Activated B cell treated with CpG ODN at 0.5 μM for 24 hours (primary cell): ENCODE measurements at regions of chr19 and their contacts with region 1.

Region 1: GRCh38 chr19:38492181-38492813 is 58.8 kb downstream of the RYR1 start:
- DNase-seq: no peak
- ATAC-seq: peak; percentile 50
- H3K4me3 Mint-ChIP-seq: no peak overlapping the region
- H3K27ac Mint-ChIP-seq: no peak overlapping the region
- H3K4me1 Mint-ChIP-seq: peaks cover 16% of the 10 kb centered on the region
- H3K27me3 Mint-ChIP-seq: peaks cover 18% of the 10 kb centered on the region
- CTCF ChIP-seq: no peak

Region 2: GRCh38 chr19:38464421-38465082 is 27.7 kb before region 1 on chr19:
- CTCF ChIA-PET with region 1: no interaction called
- POLR2A ChIA-PET with region 1: no interaction called
- intact Hi-C with region 1: no loop called
- DNase-seq: no peak
- ATAC-seq: no peak
- H3K4me3 Mint-ChIP-seq: no peak overlapping the region
- H3K27ac Mint-ChIP-seq: no peak overlapping the region
- H3K4me1 Mint-ChIP-seq: no peaks in the 10 kb centered on the region
- H3K27me3 Mint-ChIP-seq: peaks cover 22% of the 10 kb centered on the region
- CTCF ChIP-seq: no peak

Region 3: DNA sequence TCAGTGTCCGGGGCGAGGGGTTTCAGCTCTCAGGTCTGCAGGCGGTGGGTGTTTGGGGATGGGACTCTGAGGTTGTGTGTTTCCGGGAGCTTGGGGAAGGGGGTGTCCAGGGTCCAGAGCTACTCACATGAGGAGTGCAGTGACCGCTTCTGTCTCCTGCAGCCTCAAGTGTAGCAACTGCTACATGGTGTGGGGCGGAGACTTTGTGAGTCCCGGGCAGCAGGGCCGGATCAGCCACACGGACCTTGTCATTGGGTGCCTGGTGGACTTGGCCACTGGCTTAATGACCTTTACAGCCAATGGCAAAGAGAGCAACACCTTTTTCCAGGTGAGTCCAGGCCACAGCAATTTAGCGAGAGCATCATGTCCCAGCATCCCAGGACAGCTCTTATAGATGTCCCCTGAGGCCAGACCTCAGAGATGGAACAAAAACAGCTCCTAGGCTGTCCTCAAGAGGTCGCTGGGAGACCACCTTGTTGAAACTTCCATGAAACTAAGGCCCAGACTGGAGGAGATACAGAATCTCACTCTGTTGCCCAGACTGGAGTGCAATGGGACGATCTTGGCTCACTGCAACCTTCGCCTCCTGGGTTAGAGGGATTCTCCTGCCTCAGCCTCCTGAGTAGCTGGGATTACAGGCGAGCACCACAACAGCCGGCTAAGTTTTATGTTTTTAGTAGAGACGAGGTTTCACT is 13.9 kb before region 1 on chr19:
- CTCF ChIA-PET with region 1: no interaction called
- POLR2A ChIA-PET with region 1: no interaction called
- intact Hi-C with region 1: no loop called
- DNase-seq: no peak
- ATAC-seq: no peak
- H3K4me3 Mint-ChIP-seq: no peak overlapping the region
- H3K27ac Mint-ChIP-seq: no peak overlapping the region
- H3K4me1 Mint-ChIP-seq: no peaks in the 10 kb centered on the region
- H3K27me3 Mint-ChIP-seq: peaks cover 5% of the 10 kb centered on the region
- CTCF ChIP-seq: no peak

Region 4: GRCh38 chr19:38544034-38544958 is 52.0 kb after region 1 on chr19:
- CTCF ChIA-PET with region 1: no interaction called
- POLR2A ChIA-PET with region 1: interaction called, 10 read pairs
- intact Hi-C with region 1: no loop called
- DNase-seq: no peak
- ATAC-seq: peak; percentile 65
- H3K4me3 Mint-ChIP-seq: peak overlapping the region; percentile 11
- H3K27ac Mint-ChIP-seq: peak overlapping the region; percentile 30
- H3K4me1 Mint-ChIP-seq: peaks cover 33% of the 10 kb centered on the region
- H3K27me3 Mint-ChIP-seq: no peaks in the 10 kb centered on the region
- CTCF ChIP-seq: peak; percentile 41

Region 5: GRCh38 chr19:38862321-38863059 is 370.2 kb after region 1 on chr19:
- CTCF ChIA-PET with region 1: no interaction called
- POLR2A ChIA-PET with region 1: no interaction called
- intact Hi-C with region 1: no loop called
- DNase-seq: no peak
- ATAC-seq: no peak
- H3K4me3 Mint-ChIP-seq: peak overlapping the region; percentile 38
- H3K27ac Mint-ChIP-seq: peak overlapping the region; percentile 75
- H3K4me1 Mint-ChIP-seq: peaks cover 79% of the 10 kb centered on the region
- H3K27me3 Mint-ChIP-seq: no peaks in the 10 kb centered on the region
- CTCF ChIP-seq: no peak